T-cell (primary cell): ENCODE measurements at regions of chr12 and their contacts with region 1.

Region 1: DNA sequence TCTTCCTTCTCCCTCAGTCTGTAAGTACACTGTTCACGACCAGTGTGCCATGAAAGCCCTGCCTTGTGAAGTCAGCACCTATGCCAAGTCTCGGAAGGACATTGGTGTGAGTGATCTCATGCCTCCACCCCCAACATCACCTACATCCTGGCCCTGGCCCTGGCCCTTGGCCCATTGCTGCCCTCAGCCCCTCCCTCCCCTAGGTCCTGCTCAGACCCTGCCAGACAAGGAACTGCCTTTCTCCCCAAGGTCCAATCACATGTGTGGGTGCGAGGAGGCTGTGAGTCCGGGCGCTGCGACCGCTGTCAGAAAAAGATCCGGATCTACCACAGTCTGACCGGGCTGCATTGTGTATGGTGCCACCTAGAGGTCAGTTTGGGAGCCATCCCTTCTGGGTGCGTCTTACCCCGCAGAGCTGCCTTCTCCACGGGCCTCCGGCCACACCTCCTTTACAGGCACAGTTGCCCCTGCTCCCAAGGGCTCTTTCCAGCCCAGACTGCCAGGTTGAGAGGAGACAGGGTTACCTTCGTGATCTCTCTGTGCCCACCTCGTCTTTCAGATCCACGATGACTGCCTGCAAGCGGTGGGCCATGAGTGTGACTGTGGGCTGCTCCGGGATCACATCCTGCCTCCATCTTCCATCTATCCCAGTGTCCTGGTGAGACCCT is 9.2 kb downstream of the DGKA start:
- DNase-seq: peak; percentile 62 to 92 (median 78)
- ATAC-seq: peak; percentile 81 to 91 (median 84)
- H3K4me3 ChIP-seq: no peak overlapping the region
- H3K4me3 Mint-ChIP-seq: peak overlapping the region; percentile 2 to 63 (median 44)
- H3K27ac ChIP-seq: peak overlapping the region; percentile 48
- H3K27ac Mint-ChIP-seq: peak overlapping the region; percentile 96 to 99
- H3K4me1 ChIP-seq: peaks cover 48 to 64% of the 10 kb centered on the region in 2 experiments
- H3K4me1 Mint-ChIP-seq: peaks cover 82 to 91% (median 89%) of the 10 kb centered on the region in 3 donors
- H3K27me3 ChIP-seq: no peaks in the 10 kb centered on the region
- H3K27me3 Mint-ChIP-seq: no peaks in the 10 kb centered on the region

Region 2: DNA sequence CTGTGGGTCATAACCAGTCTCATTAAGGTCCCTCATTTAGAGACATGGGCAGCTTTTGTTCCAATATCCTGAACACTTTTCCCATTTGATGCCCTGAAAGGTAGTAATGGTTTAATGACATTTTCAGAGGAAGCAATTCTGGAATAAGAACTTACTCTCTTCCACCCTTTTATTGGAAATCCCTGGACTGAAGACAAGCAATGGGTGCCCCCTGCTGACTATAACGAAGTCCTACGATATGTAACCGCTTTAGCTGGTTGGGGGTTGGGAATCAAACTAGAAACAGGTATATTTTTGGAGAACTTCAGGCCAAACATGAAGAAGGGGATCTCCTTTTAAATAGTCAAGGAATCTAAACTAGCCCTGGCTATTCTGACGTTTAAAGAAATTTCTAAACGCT is 143.1 kb before region 1 on chr12:
- CTCF ChIA-PET with region 1: no interaction called
- POLR2A ChIA-PET with region 1: interaction called in 1 of 2 experiments, 14 read pairs
- DNase-seq: peak in 1 of 35 experiments; percentile 47
- ATAC-seq: no peak
- H3K4me3 ChIP-seq: no peak overlapping the region
- H3K4me3 Mint-ChIP-seq: no peak overlapping the region
- H3K27ac ChIP-seq: no peak overlapping the region
- H3K27ac Mint-ChIP-seq: no peak overlapping the region
- H3K4me1 ChIP-seq: no peaks in the 10 kb centered on the region
- H3K4me1 Mint-ChIP-seq: peaks cover 0 to 5% (median 3%) of the 10 kb centered on the region in 3 donors
- H3K27me3 ChIP-seq: no peaks in the 10 kb centered on the region
- H3K27me3 Mint-ChIP-seq: no peaks in the 10 kb centered on the region

Region 3: GRCh38 chr12:55817346-55818139 is 122.7 kb before region 1 on chr12 and contains the starts of genes ORMDL2 and SARNP:
- CTCF ChIA-PET with region 1: interaction called in 1 of 2 experiments, 17 read pairs
- POLR2A ChIA-PET with region 1: no interaction called
- DNase-seq: peak; percentile 77 to 100 (median 97)
- ATAC-seq: peak; percentile 91 to 96 (median 94)
- H3K4me3 ChIP-seq: peak within 1 kb of the TSS; percentile 83 to 97
- H3K4me3 Mint-ChIP-seq: no peak within 1 kb of the TSS
- H3K27ac ChIP-seq: peak within 1 kb of the TSS; percentile 65
- H3K27ac Mint-ChIP-seq: no peak within 1 kb of the TSS
- H3K4me1 ChIP-seq: peaks cover 24 to 26% of the 10 kb centered on the region in 2 experiments
- H3K4me1 Mint-ChIP-seq: peaks cover 41 to 51% (median 50%) of the 10 kb centered on the region in 3 donors
- H3K27me3 ChIP-seq: no peaks in the 10 kb centered on the region
- H3K27me3 Mint-ChIP-seq: no peaks in the 10 kb centered on the region
- total RNA-seq, gene ORMDL2: 19.0 to 46.8 (median 41.6) TPM
- total RNA-seq, gene SARNP: 36.9 to 50.3 (median 46.8) TPM

Region 4: DNA sequence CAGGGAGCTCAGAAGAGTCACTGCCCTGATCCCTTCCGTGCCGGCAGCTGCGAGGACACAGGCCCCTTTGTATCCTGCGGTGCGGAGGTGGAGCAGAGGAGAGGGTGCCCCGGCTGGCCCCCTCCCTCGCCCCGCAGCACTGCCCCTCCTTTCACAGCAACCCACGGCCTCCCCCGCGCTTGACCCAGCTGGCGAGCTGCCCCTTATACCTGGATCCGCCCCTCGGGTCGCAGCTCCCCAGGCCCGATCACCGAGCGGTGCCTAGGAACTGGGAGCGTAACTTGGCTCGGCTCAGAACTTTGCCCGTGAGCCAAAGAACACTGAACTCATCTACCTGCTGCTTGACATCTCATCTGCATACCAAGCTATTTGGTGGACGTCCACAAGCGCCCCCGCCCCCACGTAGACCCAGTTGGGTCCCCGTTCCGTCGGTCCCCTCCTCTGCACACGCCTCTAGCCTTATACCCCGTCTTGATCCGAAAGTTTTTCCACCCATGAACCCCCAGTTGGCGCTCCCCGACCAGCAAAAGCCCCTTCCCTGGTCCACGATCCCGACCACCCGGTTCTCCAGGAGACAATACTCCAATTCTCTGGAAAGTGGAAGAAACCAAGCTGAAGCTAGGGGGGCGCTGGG is 110.1 kb before region 1 on chr12:
- CTCF ChIA-PET with region 1: interaction called in 1 of 2 experiments, 10 read pairs
- POLR2A ChIA-PET with region 1: interaction called in 1 of 2 experiments, 4 read pairs
- DNase-seq: peak in 28 of 35 experiments; percentile 10 to 52 (median 28)
- ATAC-seq: peak; percentile 10 to 19 (median 12)
- H3K4me3 ChIP-seq: peak overlapping the region; percentile 72 to 86
- H3K4me3 Mint-ChIP-seq: peak overlapping the region; percentile 94 to 97 (median 94)
- H3K27ac ChIP-seq: peak overlapping the region; percentile 50
- H3K27ac Mint-ChIP-seq: peak overlapping the region; percentile 88 to 90
- H3K4me1 ChIP-seq: peaks cover 26 to 62% of the 10 kb centered on the region in 2 experiments
- H3K4me1 Mint-ChIP-seq: peaks cover 53 to 65% (median 65%) of the 10 kb centered on the region in 3 donors
- H3K27me3 ChIP-seq: no peaks in the 10 kb centered on the region
- H3K27me3 Mint-ChIP-seq: no peaks in the 10 kb centered on the region

Region 5: GRCh38 chr12:56014206-56014605 is 74.0 kb after region 1 on chr12:
- CTCF ChIA-PET with region 1: no interaction called
- POLR2A ChIA-PET with region 1: no interaction called
- DNase-seq: no peak
- ATAC-seq: no peak
- H3K4me3 ChIP-seq: no peak overlapping the region
- H3K4me3 Mint-ChIP-seq: no peak overlapping the region
- H3K27ac ChIP-seq: no peak overlapping the region
- H3K27ac Mint-ChIP-seq: no peak overlapping the region
- H3K4me1 ChIP-seq: no peaks in the 10 kb centered on the region
- H3K4me1 Mint-ChIP-seq: peaks cover under 1 to 2% (median under 1%) of the 10 kb centered on the region in 3 donors
- H3K27me3 ChIP-seq: no peaks in the 10 kb centered on the region
- H3K27me3 Mint-ChIP-seq: no peaks in the 10 kb centered on the region